Aorta (tissue), 5 donors: ENCODE measurements at regions of chr13 and their contacts with region 1.

Region 1: GRCh38 chr13:36981156-36981743 is 17.9 kb downstream of the ALG5 start:
- DNase-seq: no peak
- ATAC-seq: peak; percentile 69
- H3K4me3 ChIP-seq: no peak overlapping the region
- H3K27ac ChIP-seq: no peak overlapping the region
- H3K4me1 ChIP-seq: no peaks in the 10 kb centered on the region
- H3K27me3 ChIP-seq: no peaks in the 10 kb centered on the region

Region 2: GRCh38 chr13:36858290-36858689 is 123.0 kb before region 1 on chr13:
- intact Hi-C with region 1: loop called (anchors 1 to 2 kb)
- DNase-seq: no peak
- ATAC-seq: peak; percentile 68
- H3K4me3 ChIP-seq: no peak overlapping the region
- H3K27ac ChIP-seq: no peak overlapping the region
- H3K4me1 ChIP-seq: no peaks in the 10 kb centered on the region
- H3K27me3 ChIP-seq: no peaks in the 10 kb centered on the region